Transverse colon (tissue), 4 donors: ENCODE measurements at regions of chr3 and their contacts with region 1.

Region 1: GRCh38 chr3:56157693-56158362 is 310.4 kb downstream of the ERC2 start:
- DNase-seq: no peak
- H3K4me3 ChIP-seq: no peak overlapping the region
- H3K27ac ChIP-seq: no peak overlapping the region
- H3K4me1 ChIP-seq: no peaks in the 10 kb centered on the region
- H3K27me3 ChIP-seq: no peaks in the 10 kb centered on the region
- CTCF ChIP-seq: no peak
- EP300 ChIP-seq: no peak
- POLR2A ChIP-seq: no peak

Region 2: GRCh38 chr3:55955891-55956477 is 201.8 kb before region 1 on chr3:
- in situ Hi-C with region 1: no loop called
- intact Hi-C with region 1: no loop called
- DNase-seq: no peak
- H3K4me3 ChIP-seq: no peak overlapping the region
- H3K27ac ChIP-seq: no peak overlapping the region
- H3K4me1 ChIP-seq: no peaks in the 10 kb centered on the region
- H3K27me3 ChIP-seq: no peaks in the 10 kb centered on the region
- CTCF ChIP-seq: no peak
- EP300 ChIP-seq: no peak
- POLR2A ChIP-seq: no peak

Region 3: DNA sequence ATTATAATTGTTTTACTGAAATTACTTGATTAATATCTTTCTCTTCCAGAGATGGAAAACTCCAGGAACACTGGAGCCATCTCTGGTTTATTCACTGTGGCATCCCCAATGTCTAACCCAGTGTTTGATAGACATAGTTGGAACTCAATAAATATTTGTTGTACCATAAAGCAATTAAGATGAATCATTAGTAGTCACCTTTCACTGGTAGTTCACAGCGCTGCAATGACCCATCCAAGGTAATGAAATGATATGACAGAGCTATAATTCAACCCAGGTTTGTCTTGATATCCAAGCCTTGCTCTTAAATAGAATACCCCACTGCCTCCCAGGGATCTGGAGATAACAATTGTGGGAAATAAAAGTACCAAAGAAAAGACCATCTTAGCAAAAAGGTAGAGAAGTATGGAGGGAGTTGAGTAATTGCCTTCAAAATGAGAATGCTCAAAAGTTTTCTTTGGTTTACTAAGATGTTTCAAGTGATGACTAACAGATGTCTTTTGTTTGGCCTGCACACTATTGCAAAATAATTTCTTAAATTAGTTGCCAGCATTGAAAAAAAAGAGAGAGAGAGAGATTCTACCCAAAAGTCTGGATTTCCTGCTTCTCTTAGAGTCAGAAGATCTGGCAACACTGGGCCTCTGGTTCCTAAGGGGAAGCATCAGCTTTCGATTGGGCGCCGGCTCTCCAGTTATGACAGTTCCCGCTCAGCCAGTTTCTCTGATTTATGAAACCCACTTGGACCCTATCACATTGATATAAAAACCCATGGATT is 38.1 kb before region 1 on chr3:
- in situ Hi-C with region 1: no loop called
- intact Hi-C with region 1: loop called (anchors 2 kb)
- DNase-seq: no peak
- H3K4me3 ChIP-seq: no peak overlapping the region
- H3K27ac ChIP-seq: no peak overlapping the region
- H3K4me1 ChIP-seq: no peaks in the 10 kb centered on the region
- H3K27me3 ChIP-seq: no peaks in the 10 kb centered on the region
- CTCF ChIP-seq: no peak
- EP300 ChIP-seq: no peak
- POLR2A ChIP-seq: no peak